Psoas muscle (tissue), 8 donors: ENCODE measurements at regions of chr19 and their contacts with region 1.

Region 1: DNA sequence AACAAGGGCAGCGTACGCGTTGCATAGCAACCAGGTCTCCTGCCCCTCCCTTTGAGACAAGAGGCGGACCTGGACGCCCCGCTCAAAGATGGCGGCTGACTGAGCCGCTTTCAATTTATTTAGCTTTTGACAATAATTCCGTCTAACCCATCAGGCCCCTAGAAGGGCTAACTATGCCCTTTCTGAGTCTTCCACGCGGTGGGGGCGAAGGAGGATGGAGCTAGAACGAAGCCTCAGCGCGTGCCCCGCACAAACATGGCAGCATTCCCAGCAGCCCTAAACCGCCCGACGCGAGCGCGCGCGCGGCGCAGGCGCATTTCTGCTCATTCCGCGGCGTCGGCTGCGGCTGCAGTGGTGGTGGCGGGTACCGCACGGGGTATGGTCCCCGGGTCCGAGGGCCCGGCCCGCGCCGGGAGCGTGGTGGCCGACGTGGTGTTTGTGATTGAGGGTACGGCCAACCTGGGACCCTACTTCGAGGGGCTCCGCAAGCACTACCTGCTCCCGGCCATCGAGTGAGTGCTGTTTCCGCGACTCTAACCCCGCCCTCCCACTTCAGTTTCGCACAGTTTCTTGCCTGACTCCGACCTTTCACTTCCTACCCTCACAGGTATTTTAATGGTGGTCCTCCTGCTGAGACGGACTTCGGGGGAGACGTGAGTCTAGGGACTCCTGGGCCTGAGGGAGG is at the start of gene MED25:
- DNase-seq: peak; percentile 89 to 94
- ATAC-seq: peak; percentile 77 to 81 (median 80)
- H3K4me3 ChIP-seq: peak within 1 kb of the TSS; percentile 91
- H3K27ac ChIP-seq: peak within 1 kb of the TSS; percentile 92
- H3K4me1 ChIP-seq: peaks cover 20% of the 10 kb centered on the region
- H3K27me3 ChIP-seq: no peaks in the 10 kb centered on the region
- CTCF ChIP-seq: peak; percentile 31
- total RNA-seq, gene MED25: 43.0 to 97.8 (median 69.7) TPM

Region 2: GRCh38 chr19:49497047-49497788 is 320.9 kb before region 1 on chr19:
- intact Hi-C with region 1: loop called in 1 of 2 experiments (anchors 10 kb)
- DNase-seq: peak; percentile 61 to 72
- ATAC-seq: peak in 1 of 4 donors; percentile 31
- H3K4me3 ChIP-seq: peak overlapping the region; percentile 99
- H3K27ac ChIP-seq: peak overlapping the region; percentile 98
- H3K4me1 ChIP-seq: peaks cover 35% of the 10 kb centered on the region
- H3K27me3 ChIP-seq: no peaks in the 10 kb centered on the region
- CTCF ChIP-seq: no peak

Region 3: GRCh38 chr19:49676690-49677231 is 141.3 kb before region 1 on chr19:
- intact Hi-C with region 1: loop called in 1 of 2 experiments (anchors 5 kb)
- DNase-seq: peak; percentile 99 to 100
- ATAC-seq: peak; percentile 77 to 84 (median 78)
- H3K4me3 ChIP-seq: peak overlapping the region; percentile 95
- H3K27ac ChIP-seq: peak overlapping the region; percentile 99
- H3K4me1 ChIP-seq: peaks cover 38% of the 10 kb centered on the region
- H3K27me3 ChIP-seq: no peaks in the 10 kb centered on the region
- CTCF ChIP-seq: no peak

Region 4: DNA sequence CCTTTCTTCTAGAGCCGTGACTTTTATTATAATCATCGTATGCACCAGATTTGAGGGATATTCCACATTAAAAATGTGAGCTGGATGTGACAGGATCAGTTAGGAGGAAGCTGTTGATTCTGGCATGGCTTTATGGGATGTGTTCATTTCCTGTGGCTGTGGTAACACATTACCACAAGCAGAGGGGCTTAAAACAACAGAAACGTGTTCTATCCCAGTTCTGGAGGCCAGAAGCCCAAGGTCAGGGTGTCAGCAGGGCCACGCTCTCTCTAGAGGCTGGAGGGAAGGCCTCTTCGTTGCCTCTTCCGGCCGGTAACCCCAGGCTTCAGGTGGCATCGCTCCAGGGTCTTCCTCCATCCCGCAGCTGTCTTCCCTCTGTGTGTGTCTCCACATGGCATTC is 14.4 kb after region 1 on chr19:
- intact Hi-C with region 1: loop called in 1 of 2 experiments (anchors 2 kb)
- DNase-seq: no peak
- ATAC-seq: peak in 1 of 4 donors; percentile 16
- H3K4me3 ChIP-seq: no peak overlapping the region
- H3K27ac ChIP-seq: peak overlapping the region; percentile 89
- H3K4me1 ChIP-seq: peaks cover 31% of the 10 kb centered on the region
- H3K27me3 ChIP-seq: no peaks in the 10 kb centered on the region
- CTCF ChIP-seq: no peak

Region 5: DNA sequence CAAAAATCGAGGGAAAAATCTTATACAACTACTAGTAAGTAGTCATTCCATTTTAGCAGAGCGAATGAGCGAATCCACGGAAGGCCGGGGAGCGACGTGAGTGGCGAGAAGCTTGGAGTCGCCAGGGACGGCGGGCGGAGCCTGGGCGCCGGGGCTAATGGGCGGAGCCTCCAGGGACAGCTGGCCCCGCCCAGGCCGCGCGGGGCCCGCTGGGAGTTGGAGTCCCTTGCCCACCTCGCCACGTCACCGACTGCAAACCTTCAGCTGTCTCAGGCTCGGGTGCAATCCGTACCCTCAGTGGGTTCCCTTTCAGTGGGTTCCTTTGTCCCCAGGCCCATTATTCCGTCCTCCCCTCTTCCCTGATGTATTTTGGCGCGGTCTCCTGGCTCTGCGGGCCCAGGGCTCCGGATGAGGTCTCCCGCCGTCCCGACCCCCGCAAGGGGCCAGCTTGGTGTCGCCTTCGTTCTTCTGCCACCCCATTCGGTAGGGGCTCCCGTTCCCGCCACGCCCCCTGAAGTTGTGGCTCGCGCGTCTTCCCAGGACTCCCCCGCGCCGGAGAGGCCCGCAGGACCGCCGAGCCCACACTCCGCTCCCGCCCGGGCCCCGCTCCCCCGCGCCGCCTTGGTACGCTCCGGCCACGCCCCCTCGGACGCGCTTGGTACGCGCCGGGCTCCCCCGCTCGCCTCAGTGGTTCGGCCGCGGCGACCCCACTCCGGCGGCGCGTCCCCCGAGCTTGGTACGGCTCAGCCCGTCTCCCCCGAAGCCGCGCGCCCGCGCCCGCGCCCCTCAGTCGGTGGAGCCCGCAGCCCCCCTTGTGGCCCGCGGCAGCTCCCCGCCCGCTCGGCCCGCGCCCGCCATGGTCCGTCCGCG is 32.6 kb after region 1 on chr19 and contains the start of gene PTOV1:
- intact Hi-C with region 1: loop called in 1 of 2 experiments (anchors 5 kb)
- DNase-seq: peak; percentile 91 to 97
- ATAC-seq: peak; percentile 92 to 96 (median 94)
- H3K4me3 ChIP-seq: peak within 1 kb of the TSS; percentile 96
- H3K27ac ChIP-seq: peak within 1 kb of the TSS; percentile 100
- H3K4me1 ChIP-seq: peaks cover 28% of the 10 kb centered on the region
- H3K27me3 ChIP-seq: no peaks in the 10 kb centered on the region
- CTCF ChIP-seq: no peak
- total RNA-seq, gene PTOV1: 93.2 to 189 (median 151) TPM

Region 6: DNA sequence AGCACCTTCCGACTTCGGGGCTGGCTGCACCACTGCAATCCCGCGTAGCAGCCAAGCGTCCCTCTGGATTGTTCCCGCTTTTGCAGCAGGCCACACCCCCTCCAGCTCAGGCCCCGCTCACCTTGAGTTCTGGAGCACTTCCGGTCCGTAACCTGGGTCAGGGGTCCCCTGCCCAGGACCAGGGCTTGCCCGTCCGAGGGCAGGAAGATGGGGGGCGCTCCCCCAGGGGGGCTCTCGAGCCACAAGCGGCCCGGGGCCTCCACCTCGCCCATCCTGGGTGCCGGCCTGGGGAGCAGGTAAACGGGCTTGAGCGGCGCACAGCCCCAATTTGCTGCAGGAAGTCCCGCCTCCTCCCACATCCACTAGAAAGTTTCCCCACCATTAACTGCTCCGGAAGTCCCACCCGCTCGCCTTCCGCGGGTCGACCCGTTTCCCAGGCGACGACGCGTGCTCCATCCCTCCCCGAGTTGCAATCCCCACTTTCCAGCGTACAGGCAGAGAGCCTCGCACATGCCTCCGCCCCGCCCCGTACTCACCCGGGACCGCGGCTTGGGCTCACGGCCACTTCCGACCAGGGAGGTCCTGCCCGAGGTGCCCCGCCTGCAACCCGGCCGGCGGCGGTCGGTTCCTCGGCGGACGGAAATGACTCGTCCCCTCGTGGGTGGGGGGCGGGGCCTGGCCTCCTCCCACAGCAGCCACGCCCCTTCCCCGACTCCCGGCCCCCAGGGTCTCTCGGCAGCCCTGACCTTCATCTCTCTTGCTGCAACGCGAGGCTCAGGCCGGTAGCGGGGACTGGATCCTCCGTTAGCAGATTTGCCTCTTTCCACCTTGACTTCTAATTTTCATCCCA is 49.1 kb after region 1 on chr19 and contains the start of gene PNKP:
- intact Hi-C with region 1: no loop called
- DNase-seq: peak; percentile 95
- ATAC-seq: peak; percentile 67 to 74 (median 70)
- H3K4me3 ChIP-seq: peak within 1 kb of the TSS; percentile 77
- H3K27ac ChIP-seq: peak within 1 kb of the TSS; percentile 94
- H3K4me1 ChIP-seq: peaks cover 38% of the 10 kb centered on the region
- H3K27me3 ChIP-seq: no peaks in the 10 kb centered on the region
- CTCF ChIP-seq: no peak
- total RNA-seq, gene PNKP: 20.6 to 28.2 (median 23.9) TPM

Region 7: GRCh38 chr19:49877020-49877878 is 59.1 kb after region 1 on chr19 and contains the starts of genes AKT1S1 and TBC1D17:
- intact Hi-C with region 1: loop called in 1 of 2 experiments (anchors 2 kb)
- DNase-seq: peak; percentile 98 to 100
- ATAC-seq: peak; percentile 80 to 87 (median 84)
- H3K4me3 ChIP-seq: peak within 1 kb of the TSS; percentile 69
- H3K27ac ChIP-seq: peak within 1 kb of the TSS; percentile 92
- H3K4me1 ChIP-seq: peaks cover 35% of the 10 kb centered on the region
- H3K27me3 ChIP-seq: no peaks in the 10 kb centered on the region
- CTCF ChIP-seq: no peak
- total RNA-seq, gene AKT1S1: 56.0 to 82.8 (median 57.2) TPM
- total RNA-seq, gene TBC1D17: 81.8 to 107 (median 94.8) TPM